Activated T-helper 1 cell treated with anti-CD3 and anti-CD28 coated beads, Interleukin-12 subunit alpha, Interleukin-12 subunit beta, Interleukin-2, Interleukin-4 antibody, amounts not matched to agents 30 ng/mL and 10 ng/mL and 1 ng/mL, durations not matched to agents 14 hours and 24 hours and 36 hours (primary cell): ENCODE measurements at regions of chr2 and their contacts with region 1.

Region 1: DNA sequence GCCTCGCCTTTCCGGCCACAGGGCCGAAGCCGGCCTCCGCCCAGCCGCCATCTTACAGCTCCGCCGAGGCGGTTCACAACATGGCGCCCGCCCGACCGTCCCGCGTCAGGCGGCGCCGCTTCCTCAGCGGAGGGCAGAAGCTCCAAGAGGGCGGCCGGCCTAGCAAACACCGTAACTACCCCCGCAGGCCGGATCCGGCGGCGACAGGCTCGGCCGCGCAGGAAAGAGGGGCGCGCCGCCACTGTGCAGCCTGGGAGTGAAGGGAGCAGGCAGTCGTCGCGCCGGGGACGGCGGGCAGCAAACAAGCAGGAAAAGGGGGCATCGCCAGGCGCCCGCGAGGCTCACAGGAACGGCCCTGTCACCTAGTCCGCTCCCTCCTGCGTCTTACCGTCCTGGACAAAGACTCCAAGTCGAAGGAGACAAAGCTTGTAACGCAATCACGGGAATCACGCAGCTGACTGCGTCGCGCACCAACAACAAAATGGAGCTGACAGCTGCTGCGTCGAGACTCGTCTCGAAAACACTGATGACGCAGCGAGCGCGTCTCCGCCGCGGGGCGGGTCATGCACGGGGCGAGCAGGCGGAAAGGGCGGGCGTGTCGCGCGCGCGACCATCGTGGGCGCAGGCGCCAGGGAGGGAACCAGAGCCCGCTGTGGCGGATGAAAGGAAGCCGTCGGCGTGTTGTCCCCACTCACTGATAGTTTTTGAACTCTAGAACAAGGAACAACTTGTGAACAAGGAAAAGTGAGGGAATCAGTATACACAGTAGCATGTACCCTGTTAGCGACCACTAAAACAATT is at the start of gene CLK1:
- DNase-seq: peak; percentile 92
- H3K4me3 Mint-ChIP-seq: peak within 1 kb of the TSS; percentile 93
- H3K27ac Mint-ChIP-seq: peak within 1 kb of the TSS; percentile 97
- H3K4me1 Mint-ChIP-seq: peaks cover 50% of the 10 kb centered on the region
- H3K27me3 Mint-ChIP-seq: no peaks in the 10 kb centered on the region
- total RNA-seq, gene CLK1: 91.7 and 99.5 TPM in 2 replicates

Region 2: DNA sequence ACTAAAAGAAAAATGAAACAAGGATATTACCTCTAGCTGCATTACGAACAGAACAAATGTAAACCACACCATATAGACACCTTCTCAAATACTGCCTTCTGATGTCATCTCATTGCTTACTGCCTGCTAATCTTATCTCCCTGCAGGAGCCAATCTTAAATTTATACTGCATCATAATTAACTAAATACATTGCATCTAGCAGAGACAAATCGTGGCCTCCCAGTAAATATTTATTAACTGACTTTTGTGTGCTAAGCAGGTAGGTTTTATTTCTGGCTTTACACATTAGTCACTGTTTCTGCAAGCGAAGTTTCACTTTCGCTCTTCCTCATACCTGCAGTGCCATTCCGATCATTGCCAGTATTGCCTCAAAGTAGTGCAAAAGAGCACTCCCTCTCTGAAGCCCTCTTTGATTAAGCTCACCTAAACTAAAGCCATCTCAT is 490.4 kb before region 1 on chr2:
- intact Hi-C with region 1: loop called (anchors 10 kb)
- DNase-seq: peak; percentile 49
- H3K4me3 Mint-ChIP-seq: peak overlapping the region; percentile 79
- H3K27ac Mint-ChIP-seq: peak overlapping the region; percentile 86
- H3K4me1 Mint-ChIP-seq: peaks cover 55% of the 10 kb centered on the region
- H3K27me3 Mint-ChIP-seq: no peaks in the 10 kb centered on the region

Region 3: DNA sequence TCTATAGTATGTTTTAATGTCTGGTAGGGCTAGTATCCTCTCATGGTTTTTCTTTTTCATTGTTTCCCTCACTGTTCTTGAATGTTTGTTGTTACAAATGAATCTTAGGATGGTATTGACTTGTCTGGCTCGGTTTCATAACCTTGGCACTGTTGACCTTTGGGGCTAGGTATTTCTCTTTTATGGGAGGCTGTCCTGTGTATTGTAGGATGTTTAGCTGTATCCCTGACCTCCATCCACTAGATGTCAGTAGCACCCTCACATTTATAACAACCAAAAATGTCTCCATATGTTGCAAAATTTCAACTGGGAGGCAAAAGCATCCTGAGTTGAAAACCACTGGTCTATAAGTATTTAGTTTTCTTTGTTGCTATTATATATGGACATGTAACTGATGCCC is 285.6 kb before region 1 on chr2:
- intact Hi-C with region 1: loop called (anchors 5 kb)
- DNase-seq: no peak
- H3K4me3 Mint-ChIP-seq: no peak overlapping the region
- H3K27ac Mint-ChIP-seq: no peak overlapping the region
- H3K4me1 Mint-ChIP-seq: peaks cover 18% of the 10 kb centered on the region
- H3K27me3 Mint-ChIP-seq: no peaks in the 10 kb centered on the region

Region 4: DNA sequence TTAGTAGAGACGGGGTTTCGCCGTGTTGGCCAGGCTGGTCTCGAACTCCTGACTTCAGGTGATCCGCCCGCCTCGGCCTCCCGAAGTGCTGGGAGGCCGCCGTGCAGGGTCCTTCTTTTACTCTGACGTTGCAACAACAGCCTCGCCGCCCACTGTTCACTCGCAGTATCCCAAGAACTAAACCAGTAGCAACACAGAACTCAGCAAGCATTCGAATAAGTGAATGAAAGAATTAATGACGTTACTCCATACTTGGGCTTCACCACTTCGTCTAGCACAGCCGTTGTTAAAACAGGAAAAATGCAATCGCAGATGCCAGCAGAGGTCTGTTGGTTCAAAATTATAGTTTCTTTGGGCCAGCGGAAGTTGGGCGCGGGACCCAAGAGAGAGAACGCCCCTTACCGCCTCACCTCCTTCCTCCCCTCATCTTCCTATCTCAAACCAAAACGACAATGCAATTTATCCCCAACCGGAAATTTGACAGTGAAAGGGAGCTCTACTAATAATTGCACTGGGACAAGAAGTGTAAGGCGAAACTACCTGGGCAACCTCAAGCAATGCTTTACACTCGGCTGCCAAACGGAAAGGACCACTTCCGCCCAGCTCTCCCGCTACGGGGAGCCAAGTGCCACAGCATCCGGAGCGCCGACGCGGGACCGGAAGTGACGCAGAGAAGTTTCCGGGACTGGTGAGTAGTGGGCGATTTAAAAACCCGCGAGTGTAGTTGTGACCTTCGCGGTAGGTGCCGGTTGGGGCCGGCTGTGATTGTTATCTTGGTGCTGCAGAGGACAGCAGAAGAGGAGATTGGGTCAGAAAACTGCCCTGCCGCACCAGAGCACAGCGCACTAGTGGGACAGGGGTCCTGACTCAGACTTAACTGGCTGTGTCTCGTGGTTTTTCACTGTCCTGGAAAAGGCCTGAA is 24.6 kb after region 1 on chr2 and contains the starts of genes NIF3L1 and PPIL3:
- intact Hi-C with region 1: loop called (anchors 1 kb)
- DNase-seq: peak; percentile 96
- H3K4me3 Mint-ChIP-seq: peak within 1 kb of the TSS; percentile 97
- H3K27ac Mint-ChIP-seq: peak within 1 kb of the TSS; percentile 99
- H3K4me1 Mint-ChIP-seq: peaks cover 54% of the 10 kb centered on the region
- H3K27me3 Mint-ChIP-seq: no peaks in the 10 kb centered on the region
- total RNA-seq, gene NIF3L1: 26.6 and 27.3 TPM in 2 replicates
- total RNA-seq, gene PPIL3: 44.2 TPM in 2 replicates

Region 5: GRCh38 chr2:201071479-201072200 is 207.3 kb after region 1 on chr2 and contains the starts of genes HYCC2 and NDUFB3:
- intact Hi-C with region 1: loop called (anchors 1 kb)
- DNase-seq: peak; percentile 90
- H3K4me3 Mint-ChIP-seq: peak within 1 kb of the TSS; percentile 90
- H3K27ac Mint-ChIP-seq: peak within 1 kb of the TSS; percentile 95
- H3K4me1 Mint-ChIP-seq: peaks cover 49% of the 10 kb centered on the region
- H3K27me3 Mint-ChIP-seq: no peaks in the 10 kb centered on the region
- total RNA-seq, gene HYCC2: 26.1 and 29.4 TPM in 2 replicates
- total RNA-seq, gene NDUFB3: 105 and 121 TPM in 2 replicates

Region 6: GRCh38 chr2:201130524-201131186 is 266.3 kb after region 1 on chr2:
- intact Hi-C with region 1: loop called (anchors 1 kb)
- DNase-seq: peak; percentile 45
- H3K4me3 Mint-ChIP-seq: peak overlapping the region; percentile 90
- H3K27ac Mint-ChIP-seq: peak overlapping the region; percentile 99
- H3K4me1 Mint-ChIP-seq: peaks cover 56% of the 10 kb centered on the region
- H3K27me3 Mint-ChIP-seq: no peaks in the 10 kb centered on the region

Region 7: DNA sequence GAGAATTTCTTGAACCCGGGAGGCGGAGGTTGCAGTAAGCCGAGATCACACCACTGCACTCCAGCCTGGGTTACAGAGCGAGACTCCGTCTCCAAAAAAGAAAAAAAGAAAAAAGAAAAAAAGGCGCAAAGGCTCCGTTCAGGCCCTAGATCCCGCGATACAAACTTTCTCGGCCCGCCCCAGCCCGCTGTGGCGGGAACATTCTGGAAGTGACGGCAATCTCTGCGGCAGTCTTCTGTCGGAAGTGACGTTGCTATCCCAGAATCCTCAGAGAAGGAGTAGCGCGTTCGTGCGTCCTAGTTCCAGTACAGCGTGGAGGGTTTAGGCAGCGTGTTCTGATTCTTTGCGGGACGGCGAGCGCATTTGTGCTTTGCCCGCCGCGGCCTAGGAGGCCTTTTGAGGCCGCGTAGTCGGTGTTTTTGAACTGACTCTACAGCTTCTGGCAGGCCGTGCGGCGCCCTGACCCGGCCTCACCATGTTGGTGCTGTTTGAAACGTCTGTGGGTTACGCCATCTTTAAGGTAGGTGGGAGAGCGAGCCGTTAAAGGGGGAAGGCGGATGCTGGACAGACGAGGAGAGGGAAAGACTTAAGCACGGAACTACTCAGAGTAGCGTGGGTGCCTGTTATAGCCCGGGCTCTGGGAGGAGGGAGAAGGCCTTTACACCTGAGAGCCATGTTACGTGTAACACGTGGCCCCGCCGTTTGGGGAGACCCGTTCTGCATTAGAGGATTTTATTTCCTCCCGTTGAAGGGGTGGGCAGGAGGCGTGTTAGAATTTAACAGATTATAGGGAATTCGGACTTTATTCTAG is 1401.3 kb after region 1 on chr2 and contains the start of gene NOP58:
- intact Hi-C with region 1: loop called (anchors 5 kb)
- DNase-seq: peak; percentile 91
- H3K4me3 Mint-ChIP-seq: peak within 1 kb of the TSS; percentile 55
- H3K27ac Mint-ChIP-seq: peak within 1 kb of the TSS; percentile 45
- H3K4me1 Mint-ChIP-seq: peaks cover 19% of the 10 kb centered on the region
- H3K27me3 Mint-ChIP-seq: no peaks in the 10 kb centered on the region
- total RNA-seq, gene NOP58: 227 and 241 TPM in 2 replicates